B cell (primary cell): ENCODE measurements at regions of chr9 and their contacts with region 1.

Region 1: DNA sequence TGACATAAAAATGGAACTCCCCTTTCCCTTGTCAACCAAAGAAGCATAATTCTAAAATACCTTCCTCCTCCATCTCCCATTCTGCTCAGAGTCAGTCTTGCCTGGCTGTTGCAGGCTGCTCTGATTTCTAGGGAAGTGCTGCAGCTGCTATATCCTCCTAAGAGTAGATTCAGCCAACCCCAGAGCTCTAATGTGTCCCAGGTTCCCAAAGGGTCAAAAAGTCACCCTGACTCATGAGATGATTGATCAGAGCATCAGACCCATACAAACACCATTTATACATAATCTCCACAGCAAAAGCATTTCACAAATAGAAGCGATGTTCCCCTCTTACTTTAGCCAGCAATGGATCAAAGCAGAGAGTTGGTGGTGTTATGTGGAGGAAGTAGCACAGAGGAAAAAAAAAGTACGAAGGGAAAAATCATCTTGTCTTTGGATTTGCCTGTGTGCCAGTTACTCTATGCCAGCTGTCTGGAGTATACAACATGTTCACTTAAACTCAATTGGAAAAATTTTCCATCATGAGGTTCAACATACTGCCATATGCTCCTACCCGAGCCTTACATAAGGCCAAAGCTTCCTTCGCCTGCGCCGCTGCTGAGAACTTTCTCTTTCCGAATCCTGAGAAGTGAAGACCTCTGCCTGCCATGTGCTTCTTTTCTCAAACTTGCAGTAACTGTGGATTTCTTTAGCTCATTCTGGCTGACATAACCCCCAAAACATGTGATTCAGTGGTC is 258.0 kb downstream of the TLE4 start:
- DNase-seq: no peak
- ATAC-seq: no peak
- H3K4me3 ChIP-seq: no peak overlapping the region
- H3K4me3 Mint-ChIP-seq: no peak overlapping the region
- H3K27ac ChIP-seq: no peak overlapping the region
- H3K27ac Mint-ChIP-seq: no peak overlapping the region
- H3K4me1 ChIP-seq: peaks cover 8 to 12% of the 10 kb centered on the region in 2 donors
- H3K4me1 Mint-ChIP-seq: peaks cover 8% of the 10 kb centered on the region
- H3K27me3 ChIP-seq: no peaks in the 10 kb centered on the region
- H3K27me3 Mint-ChIP-seq: no peaks in the 10 kb centered on the region
- CTCF ChIP-seq: no peak

Region 2: DNA sequence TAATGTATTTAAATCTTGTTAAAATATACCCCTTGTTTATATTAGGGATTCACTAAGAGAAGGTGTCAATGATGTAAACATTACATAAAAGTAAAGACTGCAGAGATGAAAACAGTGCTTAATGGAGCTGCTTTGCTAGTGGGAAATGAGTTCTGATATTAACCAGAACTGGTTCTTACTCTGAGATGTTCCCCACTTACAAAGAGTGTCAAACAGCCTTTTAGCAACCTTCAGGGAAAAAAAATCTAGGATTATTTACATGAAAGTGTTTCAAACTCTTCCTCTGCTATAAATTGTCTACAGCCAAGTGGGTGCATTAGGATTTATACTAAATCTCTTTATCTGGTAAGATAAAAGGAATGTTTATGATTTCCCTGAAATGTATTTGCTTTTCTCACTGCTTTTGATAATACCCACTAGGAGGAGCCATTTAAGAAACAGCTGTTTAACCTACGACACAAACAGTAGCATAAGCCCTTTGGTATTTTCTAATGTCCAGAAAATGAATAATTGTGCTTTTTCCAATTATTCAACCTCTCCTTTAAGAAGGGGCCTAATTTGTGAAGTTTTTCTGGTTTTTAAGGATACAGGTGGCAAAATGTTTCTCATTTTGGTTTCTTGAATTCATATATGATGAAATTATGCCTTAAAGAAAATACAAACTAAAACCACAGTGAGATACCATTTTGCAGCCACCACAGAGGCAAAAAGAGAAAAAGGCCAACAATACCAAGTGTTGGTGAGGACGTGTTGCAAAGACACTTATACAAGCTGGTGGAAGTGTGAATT is 71.7 kb before region 1 on chr9:
- CTCF ChIA-PET with region 1: no interaction called
- POLR2A ChIA-PET with region 1: no interaction called
- intact Hi-C with region 1: no loop called
- DNase-seq: peak; percentile 39
- ATAC-seq: no peak
- H3K4me3 ChIP-seq: no peak overlapping the region
- H3K4me3 Mint-ChIP-seq: no peak overlapping the region
- H3K27ac ChIP-seq: no peak overlapping the region
- H3K27ac Mint-ChIP-seq: no peak overlapping the region
- H3K4me1 ChIP-seq: no peaks in the 10 kb centered on the region
- H3K4me1 Mint-ChIP-seq: no peaks in the 10 kb centered on the region
- H3K27me3 ChIP-seq: no peaks in the 10 kb centered on the region
- H3K27me3 Mint-ChIP-seq: peaks cover 3% of the 10 kb centered on the region
- CTCF ChIP-seq: peak; percentile 65

Region 3: DNA sequence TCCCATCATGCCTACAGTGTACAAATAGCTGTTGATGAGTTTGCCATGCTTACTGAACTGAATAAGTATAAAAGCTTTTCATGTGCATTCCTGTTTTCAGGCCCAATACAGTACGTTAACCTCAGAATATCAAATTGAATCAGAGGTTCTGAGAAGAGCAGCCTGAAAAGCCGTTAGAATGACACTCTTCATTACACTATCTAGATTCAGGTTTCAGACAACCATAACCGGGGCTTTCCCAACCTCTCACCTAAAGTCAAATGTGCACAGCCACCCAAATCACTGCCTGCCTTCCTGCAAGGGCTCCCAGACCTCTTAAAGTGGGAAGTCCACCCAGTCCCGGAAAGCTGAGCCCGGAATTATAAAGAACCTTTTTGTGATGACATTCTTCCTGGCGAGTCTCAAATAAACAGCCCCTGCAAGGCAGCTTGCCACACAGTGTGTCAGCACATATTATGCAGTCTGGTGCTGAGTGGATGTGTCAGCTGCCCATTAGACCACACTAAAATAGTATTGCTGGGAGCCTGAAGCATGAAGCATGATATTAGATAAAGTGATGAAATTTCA is 12.2 kb before region 1 on chr9:
- CTCF ChIA-PET with region 1: interaction called, 3 read pairs
- POLR2A ChIA-PET with region 1: interaction called, 5 read pairs
- intact Hi-C with region 1: loop called (anchors 2 kb)
- DNase-seq: peak; percentile 56
- ATAC-seq: peak; percentile 42
- H3K4me3 ChIP-seq: no peak overlapping the region
- H3K4me3 Mint-ChIP-seq: peak overlapping the region; percentile 20
- H3K27ac ChIP-seq: no peak overlapping the region
- H3K27ac Mint-ChIP-seq: no peak overlapping the region
- H3K4me1 ChIP-seq: peaks cover 39 to 47% of the 10 kb centered on the region in 2 donors
- H3K4me1 Mint-ChIP-seq: peaks cover 46% of the 10 kb centered on the region
- H3K27me3 ChIP-seq: peaks cover 0 to 19% (median 6%) of the 10 kb centered on the region in 4 experiments
- H3K27me3 Mint-ChIP-seq: peaks cover 9% of the 10 kb centered on the region
- CTCF ChIP-seq: no peak

Region 4: GRCh38 chr9:79858508-79858907 is 28.8 kb after region 1 on chr9:
- CTCF ChIA-PET with region 1: no interaction called
- POLR2A ChIA-PET with region 1: no interaction called
- intact Hi-C with region 1: loop called (anchors 1 kb)
- DNase-seq: peak; percentile 52
- ATAC-seq: peak; percentile 90
- H3K4me3 ChIP-seq: peak overlapping the region in 2 of 5 experiments; percentile 11 to 40
- H3K4me3 Mint-ChIP-seq: peak overlapping the region; percentile 65
- H3K27ac ChIP-seq: peak overlapping the region; percentile 7 to 60
- H3K27ac Mint-ChIP-seq: peak overlapping the region; percentile 71
- H3K4me1 ChIP-seq: peaks cover 5% of the 10 kb centered on the region in 2 donors
- H3K4me1 Mint-ChIP-seq: peaks cover 14% of the 10 kb centered on the region
- H3K27me3 ChIP-seq: no peaks in the 10 kb centered on the region
- H3K27me3 Mint-ChIP-seq: no peaks in the 10 kb centered on the region
- CTCF ChIP-seq: no peak